Breast epithelium (tissue), 4 donors: ENCODE measurements at regions of chr3 and their contacts with region 1.

Region 1: DNA sequence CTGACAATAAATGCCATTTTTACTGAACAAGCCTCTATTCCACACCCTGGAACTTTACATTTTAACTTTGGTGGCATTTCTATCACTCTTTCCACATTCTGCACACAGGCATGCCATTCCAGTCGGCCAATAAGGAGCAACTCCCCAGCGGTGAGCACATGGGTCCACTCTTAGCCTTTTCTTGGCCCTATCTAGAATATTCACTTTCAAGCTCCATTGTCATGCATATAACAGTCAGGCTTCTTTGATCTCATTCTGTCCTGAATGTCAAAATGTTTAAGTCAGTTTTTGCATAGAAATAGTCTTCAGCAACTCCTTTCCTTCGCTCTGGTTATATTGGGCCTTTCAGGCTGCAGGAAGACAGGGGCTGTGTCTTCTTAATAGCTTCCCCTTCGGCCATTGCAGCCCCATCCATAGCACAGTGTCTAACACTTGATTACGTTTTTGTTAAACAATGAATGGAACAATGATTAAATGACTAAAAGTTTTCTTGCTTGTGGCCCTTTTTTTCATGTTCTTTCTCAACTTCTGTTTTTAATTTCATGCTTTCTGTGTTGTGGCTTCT is 427.3 kb downstream of the MFSD1 start:
- DNase-seq: no peak
- H3K4me3 ChIP-seq: no peak overlapping the region
- H3K27ac ChIP-seq: no peak overlapping the region
- H3K4me1 ChIP-seq: no peaks in the 10 kb centered on the region
- H3K27me3 ChIP-seq: no peaks in the 10 kb centered on the region
- CTCF ChIP-seq: no peak
- POLR2A ChIP-seq: no peak

Region 2: GRCh38 chr3:159458010-159458409 is 228.8 kb after region 1 on chr3:
- intact Hi-C with region 1: loop called (anchors 5 kb)
- DNase-seq: no peak
- H3K4me3 ChIP-seq: no peak overlapping the region
- H3K27ac ChIP-seq: no peak overlapping the region
- H3K4me1 ChIP-seq: no peaks in the 10 kb centered on the region
- H3K27me3 ChIP-seq: no peaks in the 10 kb centered on the region
- CTCF ChIP-seq: no peak
- POLR2A ChIP-seq: no peak